Pancreas (tissue), 10 donors: ENCODE measurements at regions of chr16 and their contacts with region 1.

Region 1: DNA sequence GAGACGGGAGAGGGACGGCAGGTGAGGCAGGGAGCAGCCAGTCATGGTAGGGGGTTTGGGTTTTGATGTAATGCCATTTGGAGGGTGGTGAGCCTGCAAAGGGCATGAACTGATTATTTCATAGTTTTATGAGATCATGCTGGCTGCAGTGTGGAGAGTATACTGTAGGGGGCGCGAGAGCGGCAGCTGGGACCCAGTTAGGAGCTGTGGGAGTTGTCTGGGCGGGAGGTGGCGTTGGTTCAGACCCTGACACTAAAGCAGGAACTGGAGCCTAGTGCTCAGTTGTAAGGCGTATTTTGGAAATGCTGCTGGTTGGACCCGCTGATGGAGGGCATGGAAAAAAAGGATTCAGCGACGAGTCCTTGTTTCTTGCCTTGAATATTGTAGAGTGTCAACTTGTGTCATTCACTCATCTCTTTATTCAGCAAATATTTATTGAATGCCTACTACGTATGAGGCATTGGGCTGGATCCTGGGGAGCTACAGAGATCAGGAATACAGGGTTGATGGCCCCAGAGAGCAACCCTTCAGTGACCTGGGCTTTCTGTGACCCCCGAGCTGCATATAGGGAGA is 23.7 kb upstream of the KDM8 start:
- DNase-seq: peak; percentile 80 to 96 (median 90)
- ATAC-seq: peak; percentile 97 to 100 (median 99)
- H3K4me3 ChIP-seq: no peak overlapping the region
- H3K27ac ChIP-seq: no peak overlapping the region
- H3K4me1 ChIP-seq: no peaks in the 10 kb centered on the region
- H3K27me3 ChIP-seq: no peaks in the 10 kb centered on the region
- CTCF ChIP-seq: peak; percentile 83 to 93 (median 85)

Region 2: GRCh38 chr16:27235055-27235937 is 55.7 kb after region 1 on chr16:
- intact Hi-C with region 1: loop called in 1 of 3 experiments (anchors 10 kb)
- DNase-seq: peak in 2 of 6 donors; percentile 67 to 68
- ATAC-seq: peak; percentile 68 to 83 (median 78)
- H3K4me3 ChIP-seq: no peak overlapping the region
- H3K27ac ChIP-seq: peak overlapping the region in 1 of 4 donors; percentile 8
- H3K4me1 ChIP-seq: peaks cover 0 to 10% (median 0%) of the 10 kb centered on the region in 3 donors
- H3K27me3 ChIP-seq: no peaks in the 10 kb centered on the region
- CTCF ChIP-seq: peak; percentile 32 to 67 (median 54)

Region 3: GRCh38 chr16:27367461-27368357 is 188.1 kb after region 1 on chr16:
- intact Hi-C with region 1: loop called in 2 of 3 experiments (anchors 5 to 10 kb)
- DNase-seq: peak; percentile 60 to 87 (median 76)
- ATAC-seq: peak; percentile 73 to 83 (median 83)
- H3K4me3 ChIP-seq: peak overlapping the region in 1 of 4 donors; percentile 30
- H3K27ac ChIP-seq: peak overlapping the region in 2 of 4 donors; percentile 53 to 66
- H3K4me1 ChIP-seq: peaks cover 16 to 30% (median 20%) of the 10 kb centered on the region in 3 donors
- H3K27me3 ChIP-seq: no peaks in the 10 kb centered on the region
- CTCF ChIP-seq: peak; percentile 63 to 85 (median 66)

Region 4: GRCh38 chr16:27374804-27375425 is 195.3 kb after region 1 on chr16:
- intact Hi-C with region 1: loop called in 1 of 3 experiments (anchors 5 kb)
- DNase-seq: peak in 1 of 6 donors; percentile 50
- ATAC-seq: peak; percentile 50 to 82 (median 74)
- H3K4me3 ChIP-seq: no peak overlapping the region
- H3K27ac ChIP-seq: no peak overlapping the region
- H3K4me1 ChIP-seq: no peaks in the 10 kb centered on the region
- H3K27me3 ChIP-seq: no peaks in the 10 kb centered on the region
- CTCF ChIP-seq: peak in 1 of 4 donors; percentile 23